ENCODE measurements at regions of chr21 and their contacts with region 1.

Region 1: GRCh38 chr21:29091032-29091431 is 17.6 kb upstream of the CCT8 start:
- DNase-seq: peak; percentile 65
- H3K4me3 Mint-ChIP-seq: no peak overlapping the region
- H3K27ac Mint-ChIP-seq: peak overlapping the region; percentile 80
- H3K4me1 Mint-ChIP-seq: peaks cover 34% of the 10 kb centered on the region
- H3K27me3 Mint-ChIP-seq: no peaks in the 10 kb centered on the region
- CTCF ChIP-seq: no peak

Region 2: GRCh38 chr21:29145354-29145782 is 54.3 kb after region 1 on chr21:
- CTCF ChIA-PET with region 1: interaction called, 13 read pairs
- POLR2A ChIA-PET with region 1: interaction called, 58 read pairs
- intact Hi-C with region 1: loop called (anchors 5 kb)
- DNase-seq: peak; percentile 91
- H3K4me3 Mint-ChIP-seq: peak overlapping the region; percentile 39
- H3K27ac Mint-ChIP-seq: peak overlapping the region; percentile 92
- H3K4me1 Mint-ChIP-seq: peaks cover 23% of the 10 kb centered on the region
- H3K27me3 Mint-ChIP-seq: no peaks in the 10 kb centered on the region
- CTCF ChIP-seq: no peak

Region 3: DNA sequence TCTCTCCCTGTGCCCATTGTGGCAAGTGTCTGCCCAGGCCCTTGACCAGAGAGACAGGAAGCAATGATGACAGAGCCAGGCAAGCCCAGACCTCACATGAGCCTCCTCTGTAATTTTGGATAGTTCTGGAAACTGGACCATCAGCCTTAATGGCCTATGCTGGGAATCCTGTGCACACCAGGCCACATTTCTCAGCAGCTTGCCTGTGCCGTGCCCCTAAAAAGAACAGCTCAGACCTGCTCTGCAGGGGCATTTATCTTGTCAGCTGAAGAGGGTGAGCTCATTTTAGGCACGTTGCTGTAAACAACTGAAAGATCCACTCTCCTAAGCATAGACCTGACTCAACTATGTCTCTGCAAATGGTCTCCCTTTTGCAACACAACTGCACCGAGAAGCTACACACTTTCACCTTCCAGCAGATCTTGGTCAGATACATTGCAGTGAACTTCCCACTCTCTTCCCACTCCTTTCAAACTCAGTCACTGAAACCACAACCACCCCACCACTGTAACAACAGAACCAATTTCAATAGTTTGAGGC is 154.1 kb after region 1 on chr21:
- CTCF ChIA-PET with region 1: no interaction called
- POLR2A ChIA-PET with region 1: no interaction called
- intact Hi-C with region 1: no loop called
- DNase-seq: no peak
- H3K4me3 Mint-ChIP-seq: no peak overlapping the region
- H3K27ac Mint-ChIP-seq: no peak overlapping the region
- H3K4me1 Mint-ChIP-seq: no peaks in the 10 kb centered on the region
- H3K27me3 Mint-ChIP-seq: no peaks in the 10 kb centered on the region
- CTCF ChIP-seq: no peak

Region 4: GRCh38 chr21:29287383-29287782 is 196.4 kb after region 1 on chr21:
- CTCF ChIA-PET with region 1: interaction called, 4 read pairs
- POLR2A ChIA-PET with region 1: interaction called, 3 read pairs
- intact Hi-C with region 1: loop called (anchors 1 kb)
- DNase-seq: no peak
- H3K4me3 Mint-ChIP-seq: no peak overlapping the region
- H3K27ac Mint-ChIP-seq: no peak overlapping the region
- H3K4me1 Mint-ChIP-seq: peaks cover 17% of the 10 kb centered on the region
- H3K27me3 Mint-ChIP-seq: no peaks in the 10 kb centered on the region
- CTCF ChIP-seq: no peak

Region 5: GRCh38 chr21:29372063-29372802 is 281.2 kb after region 1 on chr21:
- CTCF ChIA-PET with region 1: interaction called, 106 read pairs
- POLR2A ChIA-PET with region 1: interaction called, 7 read pairs
- intact Hi-C with region 1: loop called (anchors 1 kb)
- DNase-seq: peak; percentile 86
- H3K4me3 Mint-ChIP-seq: no peak overlapping the region
- H3K27ac Mint-ChIP-seq: no peak overlapping the region
- H3K4me1 Mint-ChIP-seq: peaks cover 3% of the 10 kb centered on the region
- H3K27me3 Mint-ChIP-seq: no peaks in the 10 kb centered on the region
- CTCF ChIP-seq: peak; percentile 69

Region 6: GRCh38 chr21:29849735-29850176 is 758.7 kb after region 1 on chr21:
- CTCF ChIA-PET with region 1: interaction called, 6 read pairs
- POLR2A ChIA-PET with region 1: interaction called, 3 read pairs
- intact Hi-C with region 1: loop called (anchors 1 kb)
- DNase-seq: peak; percentile 69
- H3K4me3 Mint-ChIP-seq: no peak overlapping the region
- H3K27ac Mint-ChIP-seq: no peak overlapping the region
- H3K4me1 Mint-ChIP-seq: no peaks in the 10 kb centered on the region
- H3K27me3 Mint-ChIP-seq: no peaks in the 10 kb centered on the region
- CTCF ChIP-seq: peak; percentile 77

Measured in MCF 10A (cell line).